ENCODE measurements at regions of chr12 and their contacts with region 1.

Region 1: GRCh38 chr12:6461401-6462233 is 8.9 kb downstream of the VAMP1 start:
- DNase-seq: peak; percentile 91
- H3K4me3 Mint-ChIP-seq: peak overlapping the region; percentile 74
- H3K27ac Mint-ChIP-seq: peak overlapping the region; percentile 98
- H3K4me1 Mint-ChIP-seq: peaks cover 84% of the 10 kb centered on the region
- H3K27me3 Mint-ChIP-seq: no peaks in the 10 kb centered on the region

Region 2: DNA sequence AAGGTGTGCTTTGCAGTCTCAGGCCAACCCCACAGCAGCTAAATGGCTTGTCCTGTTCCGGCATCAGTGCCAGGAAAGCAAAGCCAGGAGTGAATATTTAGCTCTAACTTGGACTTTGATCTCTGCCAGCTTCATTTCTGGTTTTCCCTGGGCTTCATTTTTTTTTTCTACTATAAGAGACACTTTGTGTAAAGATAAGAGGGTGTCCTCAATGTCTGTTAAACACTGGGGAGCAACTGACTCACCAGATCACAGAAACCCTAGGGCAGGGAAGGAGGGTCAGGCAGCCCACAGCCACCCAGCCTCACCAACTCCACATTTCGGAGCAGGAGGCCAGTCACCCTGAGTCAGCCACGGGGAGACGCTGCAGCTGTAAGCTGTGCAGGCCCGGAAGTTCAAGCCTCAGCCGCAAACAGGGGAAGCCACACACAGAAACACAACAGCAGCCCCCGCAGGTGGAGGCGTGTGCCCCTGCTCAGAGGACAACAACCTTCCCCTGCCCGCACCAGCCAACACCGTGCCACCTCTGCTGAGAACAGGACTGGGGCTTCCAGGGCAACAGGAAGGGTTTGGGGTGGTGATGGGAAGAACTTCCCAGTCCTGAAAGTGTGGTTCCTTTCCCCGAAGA is 126.1 kb before region 1 on chr12:
- CTCF ChIA-PET with region 1: interaction called, 31 read pairs
- POLR2A ChIA-PET with region 1: interaction called, 47 read pairs
- DNase-seq: peak; percentile 90
- H3K4me3 Mint-ChIP-seq: no peak overlapping the region
- H3K27ac Mint-ChIP-seq: no peak overlapping the region
- H3K4me1 Mint-ChIP-seq: no peaks in the 10 kb centered on the region
- H3K27me3 Mint-ChIP-seq: no peaks in the 10 kb centered on the region

Region 3: DNA sequence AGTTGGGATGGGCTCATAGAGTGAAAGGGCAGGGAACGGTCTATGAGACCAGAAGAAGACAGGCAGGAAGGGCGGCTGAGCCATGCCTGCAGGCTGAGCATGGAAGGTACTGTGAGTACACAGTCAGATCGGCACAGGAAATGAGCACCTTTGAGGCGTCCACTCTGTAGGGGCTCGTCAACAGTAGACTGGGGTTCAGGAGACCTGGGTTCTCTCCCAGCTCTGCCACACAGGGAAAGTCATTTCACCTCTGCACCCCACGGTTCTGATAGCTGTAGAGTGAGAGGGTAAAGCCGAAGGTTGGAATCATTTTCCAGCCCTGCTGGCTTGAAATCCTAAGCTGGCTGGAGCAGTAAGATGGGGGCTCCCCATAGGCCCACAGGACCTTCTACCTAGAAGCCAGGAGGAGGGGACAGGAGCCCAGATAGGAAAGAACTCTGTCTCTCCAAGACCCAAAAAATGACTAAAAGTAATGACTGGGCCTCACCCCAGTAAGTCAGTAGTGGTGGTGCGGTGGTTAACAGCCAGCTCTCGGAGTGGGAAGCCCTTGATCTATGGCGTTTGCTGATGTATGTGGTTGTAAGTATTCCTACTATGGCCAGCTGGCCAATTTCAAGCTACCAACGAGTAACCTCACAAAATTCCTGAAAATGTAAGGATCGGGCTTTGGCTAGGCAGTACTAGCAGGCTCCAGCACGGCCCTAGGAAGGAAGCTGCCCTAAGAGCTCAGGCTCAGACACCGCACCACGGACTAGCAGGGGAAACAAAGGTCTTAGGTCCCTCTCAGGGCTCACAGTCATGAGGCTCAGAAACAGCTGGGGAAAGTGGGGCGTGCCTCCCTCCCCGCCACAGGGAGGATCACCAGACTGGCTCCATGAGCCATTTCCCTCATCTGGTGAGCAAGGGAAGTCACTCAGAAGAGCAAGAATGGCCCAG is 27.1 kb before region 1 on chr12:
- CTCF ChIA-PET with region 1: interaction called, 13 read pairs
- POLR2A ChIA-PET with region 1: interaction called, 21 read pairs
- DNase-seq: peak; percentile 50
- H3K4me3 Mint-ChIP-seq: no peak overlapping the region
- H3K27ac Mint-ChIP-seq: peak overlapping the region; percentile 71
- H3K4me1 Mint-ChIP-seq: peaks cover 44% of the 10 kb centered on the region
- H3K27me3 Mint-ChIP-seq: no peaks in the 10 kb centered on the region

Region 4: GRCh38 chr12:6443361-6443983 is 18.1 kb before region 1 on chr12:
- CTCF ChIA-PET with region 1: interaction called, 19 read pairs
- POLR2A ChIA-PET with region 1: interaction called, 80 read pairs
- DNase-seq: no peak
- H3K4me3 Mint-ChIP-seq: peak overlapping the region; percentile 38
- H3K27ac Mint-ChIP-seq: peak overlapping the region; percentile 71
- H3K4me1 Mint-ChIP-seq: peaks cover 54% of the 10 kb centered on the region
- H3K27me3 Mint-ChIP-seq: no peaks in the 10 kb centered on the region

Region 5: GRCh38 chr12:6451348-6452244 is 10.0 kb before region 1 on chr12 and contains the start of gene TAPBPL:
- CTCF ChIA-PET with region 1: interaction called, 36 read pairs
- POLR2A ChIA-PET with region 1: interaction called, 215 read pairs
- DNase-seq: peak; percentile 83
- H3K4me3 Mint-ChIP-seq: peak within 1 kb of the TSS; percentile 99
- H3K27ac Mint-ChIP-seq: peak within 1 kb of the TSS; percentile 97
- H3K4me1 Mint-ChIP-seq: peaks cover 71% of the 10 kb centered on the region
- H3K27me3 Mint-ChIP-seq: no peaks in the 10 kb centered on the region
- total RNA-seq, gene TAPBPL: 45.0 to 49.0 TPM

Region 6: DNA sequence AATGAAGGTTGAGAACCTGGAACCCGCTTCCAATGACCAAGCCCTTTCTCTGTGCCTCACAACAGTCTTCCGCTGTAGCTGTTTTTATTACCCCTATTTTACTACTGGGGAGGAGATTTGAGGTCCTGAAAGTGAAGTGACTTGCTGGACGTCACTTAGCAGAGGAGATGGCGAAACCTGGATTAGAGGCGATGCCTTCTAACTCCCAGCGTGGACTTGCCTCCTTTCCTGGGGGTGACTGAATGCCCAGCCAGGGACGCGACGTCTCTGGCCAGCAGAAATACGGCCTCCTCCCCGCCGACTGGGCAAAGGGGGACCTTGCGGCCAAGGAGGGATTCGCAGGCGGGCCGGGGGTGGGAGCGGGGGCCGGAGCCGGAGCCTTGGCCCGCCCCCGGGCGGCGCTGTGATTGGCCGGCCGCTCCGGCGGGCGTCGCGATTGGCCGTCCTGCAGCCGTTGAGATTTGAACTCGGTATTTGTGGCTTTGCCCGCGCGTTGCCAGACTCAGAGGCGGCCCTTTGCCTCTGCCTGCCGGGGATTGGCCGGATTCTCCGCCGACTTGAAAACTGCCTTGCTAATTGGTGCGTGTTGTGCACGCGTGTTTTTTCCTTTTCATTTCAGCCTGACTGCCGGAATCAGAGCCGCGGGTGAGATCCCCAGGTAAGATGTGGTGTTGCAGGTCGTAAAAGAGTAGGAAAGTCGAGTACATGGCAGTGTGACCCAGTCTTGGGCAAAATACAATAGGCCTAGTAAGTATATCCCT is 32.1 kb after region 1 on chr12 and contains the start of gene NCAPD2:
- CTCF ChIA-PET with region 1: interaction called, 8 read pairs
- POLR2A ChIA-PET with region 1: interaction called, 68 read pairs
- DNase-seq: peak; percentile 98
- H3K4me3 Mint-ChIP-seq: peak within 1 kb of the TSS; percentile 96
- H3K27ac Mint-ChIP-seq: peak within 1 kb of the TSS; percentile 98
- H3K4me1 Mint-ChIP-seq: peaks cover 44% of the 10 kb centered on the region
- H3K27me3 Mint-ChIP-seq: no peaks in the 10 kb centered on the region
- total RNA-seq, gene NCAPD2: 153 to 156 TPM